MCF 10A (cell line): ENCODE measurements at regions of chr14 and their contacts with region 1.

Region 1: GRCh38 chr14:76710056-76711010 is 50.9 kb upstream of the VASH1 start:
- DNase-seq: peak; percentile 67
- H3K4me3 Mint-ChIP-seq: no peak overlapping the region
- H3K27ac Mint-ChIP-seq: no peak overlapping the region
- H3K4me1 Mint-ChIP-seq: no peaks in the 10 kb centered on the region
- H3K27me3 Mint-ChIP-seq: peaks cover 25% of the 10 kb centered on the region
- CTCF ChIP-seq: peak; percentile 41

Region 2: GRCh38 chr14:76564471-76565422 is 145.6 kb before region 1 on chr14:
- CTCF ChIA-PET with region 1: no interaction called
- POLR2A ChIA-PET with region 1: no interaction called
- intact Hi-C with region 1: no loop called
- DNase-seq: peak; percentile 55
- H3K4me3 Mint-ChIP-seq: no peak overlapping the region
- H3K27ac Mint-ChIP-seq: no peak overlapping the region
- H3K4me1 Mint-ChIP-seq: peaks cover 8% of the 10 kb centered on the region
- H3K27me3 Mint-ChIP-seq: no peaks in the 10 kb centered on the region
- CTCF ChIP-seq: no peak

Region 3: DNA sequence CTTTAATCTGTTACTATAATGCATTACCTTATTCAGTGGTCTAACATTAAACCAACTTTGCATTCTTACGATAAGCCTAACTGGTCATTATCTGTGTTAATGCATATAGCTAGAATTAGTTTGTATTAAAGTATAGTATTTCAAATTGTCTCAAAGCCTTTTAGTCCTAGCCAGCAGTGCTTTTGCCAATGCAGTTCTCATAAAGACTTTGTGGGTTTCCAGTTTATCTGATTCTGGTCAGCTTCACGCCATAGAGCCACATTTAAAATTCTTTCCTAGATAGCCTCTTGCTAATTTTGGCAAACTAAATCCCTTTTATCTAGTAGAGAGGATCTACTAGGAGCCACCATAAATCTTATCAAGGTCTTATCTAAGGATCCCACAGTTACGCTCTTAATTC is 28.0 kb before region 1 on chr14:
- CTCF ChIA-PET with region 1: interaction called, 17 read pairs
- POLR2A ChIA-PET with region 1: no interaction called
- intact Hi-C with region 1: no loop called
- DNase-seq: no peak
- H3K4me3 Mint-ChIP-seq: no peak overlapping the region
- H3K27ac Mint-ChIP-seq: no peak overlapping the region
- H3K4me1 Mint-ChIP-seq: no peaks in the 10 kb centered on the region
- H3K27me3 Mint-ChIP-seq: peaks cover 11% of the 10 kb centered on the region
- CTCF ChIP-seq: no peak

Region 4: DNA sequence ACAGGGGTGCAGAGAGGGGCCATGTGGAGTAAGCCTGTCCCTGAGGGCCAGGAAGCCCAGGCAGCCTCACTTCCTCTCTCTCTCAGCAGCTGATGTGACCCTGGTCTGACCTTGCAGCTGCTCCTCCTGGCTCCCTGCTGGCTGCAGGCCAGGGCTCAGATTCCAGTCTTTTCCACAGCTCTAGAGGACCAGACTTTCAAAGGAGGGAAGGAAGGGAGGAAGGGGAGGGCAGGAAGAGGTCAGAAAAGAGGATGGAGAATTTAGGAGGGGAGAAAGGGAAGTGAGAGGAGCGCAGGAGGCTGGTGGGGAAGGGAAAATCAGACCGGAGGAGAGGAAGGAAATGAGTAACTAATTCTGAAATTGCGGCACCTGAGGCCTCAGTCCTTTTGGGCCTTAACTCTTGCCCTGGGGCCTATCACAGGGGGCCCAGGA is 10.1 kb after region 1 on chr14:
- CTCF ChIA-PET with region 1: interaction called, 52 read pairs
- POLR2A ChIA-PET with region 1: interaction called, 3 read pairs
- intact Hi-C with region 1: no loop called
- DNase-seq: peak; percentile 35
- H3K4me3 Mint-ChIP-seq: no peak overlapping the region
- H3K27ac Mint-ChIP-seq: no peak overlapping the region
- H3K4me1 Mint-ChIP-seq: peaks cover 6% of the 10 kb centered on the region
- H3K27me3 Mint-ChIP-seq: peaks cover 31% of the 10 kb centered on the region
- CTCF ChIP-seq: no peak

Region 5: GRCh38 chr14:76784266-76785264 is 74.2 kb after region 1 on chr14:
- CTCF ChIA-PET with region 1: interaction called, 24 read pairs
- POLR2A ChIA-PET with region 1: no interaction called
- intact Hi-C with region 1: loop called (anchors 1 kb)
- DNase-seq: peak; percentile 87
- H3K4me3 Mint-ChIP-seq: no peak overlapping the region
- H3K27ac Mint-ChIP-seq: no peak overlapping the region
- H3K4me1 Mint-ChIP-seq: no peaks in the 10 kb centered on the region
- H3K27me3 Mint-ChIP-seq: no peaks in the 10 kb centered on the region
- CTCF ChIP-seq: peak; percentile 43

Region 6: DNA sequence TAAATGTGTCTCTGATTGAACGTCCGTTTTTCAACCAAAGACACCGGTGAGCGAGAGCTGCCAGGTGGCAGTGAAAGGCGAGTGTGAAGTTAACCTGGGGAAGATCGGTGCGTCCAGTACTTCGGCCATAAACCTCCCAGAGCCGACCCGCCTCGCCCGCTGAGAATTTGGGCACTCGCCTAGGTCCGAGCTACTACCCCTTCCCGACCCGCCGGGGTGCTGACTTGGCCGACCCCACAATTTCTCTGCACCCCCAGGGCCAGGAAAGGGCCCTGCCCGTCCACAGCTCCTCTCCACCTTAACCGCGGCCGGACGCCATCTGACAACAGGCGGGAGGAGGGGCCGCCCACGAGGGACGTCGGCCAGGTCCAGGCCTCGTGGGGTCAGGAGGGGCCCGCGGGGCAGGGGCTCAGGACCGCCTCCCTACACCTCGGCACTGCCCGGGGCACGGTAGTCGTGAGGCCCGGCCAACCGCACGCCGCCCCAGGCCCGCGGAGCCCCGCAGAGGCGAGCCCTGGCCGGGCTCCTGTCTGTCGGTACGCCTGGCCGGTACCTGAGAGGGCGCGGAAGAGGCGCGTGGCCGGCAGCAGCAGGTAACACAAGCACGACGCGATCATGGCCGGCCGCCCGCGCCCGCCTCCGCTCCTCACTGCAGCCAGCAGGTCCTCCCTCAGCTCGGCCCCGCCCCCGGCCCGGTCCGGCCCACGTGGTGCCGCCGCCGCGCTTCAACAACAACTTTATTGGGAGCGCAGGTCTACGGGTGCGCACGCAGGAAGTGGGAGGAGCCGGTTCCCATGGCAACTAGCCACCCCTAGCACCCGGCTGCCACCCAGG is 102.1 kb after region 1 on chr14 and contains the start of gene ANGEL1:
- CTCF ChIA-PET with region 1: interaction called, 68 read pairs
- POLR2A ChIA-PET with region 1: interaction called, 10 read pairs
- intact Hi-C with region 1: loop called (anchors 1 kb)
- DNase-seq: peak; percentile 96
- H3K4me3 Mint-ChIP-seq: peak within 1 kb of the TSS; percentile 97
- H3K27ac Mint-ChIP-seq: peak within 1 kb of the TSS; percentile 91
- H3K4me1 Mint-ChIP-seq: peaks cover 14% of the 10 kb centered on the region
- H3K27me3 Mint-ChIP-seq: no peaks in the 10 kb centered on the region
- CTCF ChIP-seq: no peak
- total RNA-seq, gene ANGEL1: 14.5 and 21.3 TPM in 2 replicates